Heart left ventricle (tissue), 16 donors: ENCODE measurements at regions of chr17 and their contacts with region 1.

Region 1: DNA sequence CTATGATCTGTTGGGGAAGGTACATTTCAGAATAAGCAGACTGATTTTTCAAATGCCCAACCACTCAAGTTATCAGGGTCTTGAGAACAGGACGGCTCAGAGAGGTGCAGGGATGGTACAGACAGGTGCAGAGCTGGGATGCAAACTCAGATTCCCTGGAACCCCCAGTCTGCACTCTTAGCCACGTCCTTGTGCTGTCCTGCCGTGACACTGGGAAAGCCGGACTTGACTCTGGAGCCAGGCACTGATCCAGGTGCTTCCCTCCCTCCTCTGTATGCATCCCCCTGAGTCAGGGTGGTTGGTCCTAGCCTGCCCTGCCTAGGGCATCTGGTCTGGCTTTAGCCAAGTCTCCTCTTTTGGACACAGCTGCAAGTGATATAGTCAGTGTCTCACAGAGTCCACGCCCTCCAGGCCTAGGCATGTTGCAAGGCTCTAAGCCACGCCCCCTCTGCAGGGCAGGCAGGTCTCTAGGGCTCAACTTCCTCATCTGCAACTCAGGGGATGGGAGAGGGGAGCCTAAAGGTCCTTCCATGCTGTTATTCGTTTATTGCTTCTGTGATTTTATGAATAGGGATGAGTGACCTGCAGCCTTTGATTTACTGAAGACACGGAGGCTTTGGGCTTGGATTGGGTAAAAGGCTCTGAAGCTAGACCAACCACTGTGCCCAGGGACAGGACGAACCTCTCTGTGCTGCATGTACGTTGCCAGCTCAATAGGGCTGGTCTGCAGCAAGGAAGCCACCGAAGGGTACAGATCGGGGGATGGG is 97.3 kb downstream of the SDK2 start:
- DNase-seq: peak in 2 of 5 donors; percentile 18 to 39
- ATAC-seq: peak in 2 of 4 donors; percentile 11 to 14
- H3K4me3 ChIP-seq: no peak overlapping the region
- H3K27ac ChIP-seq: no peak overlapping the region
- H3K4me1 ChIP-seq: peaks cover 0 to 7% (median 0%) of the 10 kb centered on the region in 12 donors
- H3K27me3 ChIP-seq: no peaks in the 10 kb centered on the region
- CTCF ChIP-seq: no peak
- POLR2A ChIP-seq: no peak

Region 2: GRCh38 chr17:73595479-73595878 is 48.5 kb after region 1 on chr17:
- intact Hi-C with region 1: loop called in 2 of 10 experiments (anchors 5 to 10 kb)
- DNase-seq: peak; percentile 25 to 73 (median 66)
- ATAC-seq: peak in 3 of 4 donors; percentile 71 to 92 (median 75)
- H3K4me3 ChIP-seq: no peak overlapping the region
- H3K27ac ChIP-seq: no peak overlapping the region
- H3K4me1 ChIP-seq: peaks cover 0 to 14% (median under 1%) of the 10 kb centered on the region in 12 donors
- H3K27me3 ChIP-seq: no peaks in the 10 kb centered on the region
- CTCF ChIP-seq: peak in 9 of 12 donors; percentile 22 to 50 (median 32)
- POLR2A ChIP-seq: no peak